ENCODE measurements at regions of chr2 and their contacts with region 1.

Region 1: DNA sequence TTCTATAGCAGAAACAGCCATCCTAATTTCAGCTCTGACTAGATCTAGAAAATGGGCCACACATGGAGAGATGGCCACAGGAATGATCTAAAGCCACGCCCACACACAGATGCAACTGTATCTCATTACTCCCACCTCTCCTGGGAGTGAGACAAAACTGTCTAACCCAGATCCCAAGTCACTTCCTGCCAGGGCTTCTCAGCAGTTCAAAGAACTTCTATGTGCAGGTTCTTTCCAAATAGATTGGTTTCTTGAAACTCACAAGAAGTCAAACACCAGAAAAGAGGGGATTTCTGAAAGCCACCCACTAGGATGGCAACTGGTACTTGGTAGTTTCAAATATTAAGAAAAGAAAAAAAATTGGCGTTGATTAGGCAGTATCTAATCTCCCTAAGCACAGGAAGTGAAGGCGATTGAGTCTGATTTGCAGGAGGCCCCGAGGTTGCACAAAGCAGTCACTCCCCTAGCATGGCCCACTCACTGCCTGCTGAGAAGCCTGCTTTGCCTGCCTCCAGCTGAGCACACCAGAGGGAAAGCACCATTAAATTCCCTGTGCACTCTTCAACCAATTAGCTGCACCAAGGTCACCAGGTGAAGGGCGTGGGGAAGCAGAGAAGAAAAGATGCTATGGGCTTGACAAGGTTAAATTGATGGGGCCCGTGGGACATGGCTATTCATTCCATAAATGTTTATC is 51.1 kb downstream of the PAPOLG start:
- DNase-seq: peak; percentile 65
- H3K4me3 ChIP-seq: peak overlapping the region; percentile 3
- H3K27ac ChIP-seq: peak overlapping the region; percentile 56
- H3K4me1 ChIP-seq: peaks cover 53% of the 10 kb centered on the region
- CTCF ChIP-seq: no peak

Region 2: DNA sequence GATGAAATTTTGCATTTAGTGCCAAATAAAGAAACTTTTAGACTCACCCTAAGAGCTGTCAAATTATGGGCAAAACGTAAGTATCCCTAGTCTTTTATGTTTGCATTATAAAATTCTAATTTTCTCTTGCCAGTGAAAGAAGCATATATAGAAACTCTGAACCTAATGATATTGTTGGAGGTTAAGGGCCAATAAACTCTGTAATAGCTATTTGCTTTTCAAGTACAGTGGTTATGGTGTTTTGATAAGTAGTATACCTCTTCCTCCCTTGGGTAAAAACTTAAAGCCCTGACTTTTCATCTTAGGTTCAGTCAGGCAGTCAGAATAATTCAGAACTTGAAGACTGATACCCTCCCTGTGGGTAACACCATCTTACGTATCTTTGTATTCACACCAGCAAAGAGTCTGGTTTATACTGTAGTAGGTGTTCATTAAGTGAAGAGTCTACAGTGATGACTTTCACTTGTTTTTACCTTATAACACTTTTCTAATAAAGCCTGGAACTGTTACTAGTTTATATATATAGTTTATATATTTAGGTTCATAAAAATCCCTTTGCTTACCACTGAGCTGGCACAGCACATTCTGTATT is 32.0 kb before region 1 on chr2:
- CTCF ChIA-PET with region 1: no interaction called
- POLR2A ChIA-PET with region 1: no interaction called
- intact Hi-C with region 1: no loop called
- DNase-seq: no peak
- H3K4me3 ChIP-seq: no peak overlapping the region
- H3K27ac ChIP-seq: no peak overlapping the region
- H3K4me1 ChIP-seq: no peaks in the 10 kb centered on the region
- CTCF ChIP-seq: no peak

Region 3: DNA sequence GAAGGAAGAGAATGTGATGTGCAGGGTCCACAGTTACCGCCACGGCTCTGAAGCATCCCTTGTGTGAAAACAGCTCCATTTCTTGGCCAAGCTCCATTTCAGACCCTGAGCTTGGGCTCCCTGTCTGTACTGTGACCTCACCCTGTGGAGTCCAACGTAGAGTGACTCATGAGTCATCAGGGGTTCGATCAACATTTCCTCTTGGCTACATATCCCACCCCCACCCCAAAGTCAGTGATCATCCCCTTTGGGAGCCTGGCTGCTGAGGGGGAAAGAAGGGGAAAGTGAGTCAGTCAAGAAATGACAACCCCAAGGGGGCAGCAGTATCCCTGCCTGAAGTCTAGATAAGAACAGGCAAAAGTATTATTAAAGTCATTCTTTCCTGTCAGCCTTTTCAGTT is 11.1 kb after region 1 on chr2:
- CTCF ChIA-PET with region 1: interaction called, 5 read pairs
- POLR2A ChIA-PET with region 1: interaction called, 12 read pairs
- intact Hi-C with region 1: no loop called
- DNase-seq: peak; percentile 59
- H3K4me3 ChIP-seq: no peak overlapping the region
- H3K27ac ChIP-seq: no peak overlapping the region
- H3K4me1 ChIP-seq: peaks cover 50% of the 10 kb centered on the region
- CTCF ChIP-seq: peak; percentile 78